AG04450 (cell line): ENCODE measurements at regions of chr9 and their contacts with region 1.

Region 1: GRCh38 chr9:113275157-113276131 is at the starts of genes CDC26 and PRPF4:
- DNase-seq: peak; percentile 96
- H3K4me3 ChIP-seq: peak within 1 kb of the TSS; percentile 98
- H3K27ac ChIP-seq: peak within 1 kb of the TSS; percentile 94
- H3K27me3 ChIP-seq: no peaks in the 10 kb centered on the region
- CTCF ChIP-seq: no peak
- polyA plus RNA-seq, gene CDC26: 38.0 and 52.6 TPM in 2 replicates
- polyA plus RNA-seq, gene PRPF4: 20.1 and 20.9 TPM in 2 replicates

Region 2: GRCh38 chr9:112884101-112884500 is 391.3 kb before region 1 on chr9:
- CTCF ChIA-PET with region 1: no interaction called
- POLR2A ChIA-PET with region 1: no interaction called
- DNase-seq: no peak
- H3K4me3 ChIP-seq: no peak overlapping the region
- H3K27ac ChIP-seq: no peak overlapping the region
- H3K27me3 ChIP-seq: no peaks in the 10 kb centered on the region
- CTCF ChIP-seq: no peak

Region 3: GRCh38 chr9:113221003-113221799 is 54.2 kb before region 1 on chr9 and contains the starts of genes FKBP15 and SLC31A1:
- CTCF ChIA-PET with region 1: interaction called, 5 read pairs
- POLR2A ChIA-PET with region 1: interaction called, 10 read pairs
- DNase-seq: peak; percentile 97
- H3K4me3 ChIP-seq: peak within 1 kb of the TSS; percentile 91
- H3K27ac ChIP-seq: peak within 1 kb of the TSS; percentile 39
- H3K27me3 ChIP-seq: no peaks in the 10 kb centered on the region
- CTCF ChIP-seq: no peak
- polyA plus RNA-seq, gene FKBP15: 27.8 and 28.5 TPM in 2 replicates
- polyA plus RNA-seq, gene SLC31A1: 34.6 and 38.4 TPM in 2 replicates

Region 4: DNA sequence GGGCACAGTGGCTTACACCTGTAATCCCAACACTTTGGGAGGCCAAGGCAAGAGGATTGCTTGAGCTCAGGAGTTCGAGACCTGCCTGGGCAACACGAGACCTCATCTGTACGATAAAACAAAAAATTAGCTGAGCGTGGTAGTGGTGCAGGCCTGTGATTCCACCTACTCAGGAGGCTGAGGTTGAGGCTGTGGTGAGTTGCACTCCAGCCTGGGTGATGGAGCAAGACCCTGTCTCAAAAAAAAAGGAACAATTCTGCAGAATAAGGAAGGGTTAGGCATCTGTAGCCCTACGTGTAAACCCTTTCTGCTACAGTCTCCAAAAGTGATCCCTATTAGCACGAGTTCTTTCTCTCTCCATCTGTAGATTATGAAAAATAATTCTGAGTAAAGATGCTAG is 20.0 kb before region 1 on chr9:
- CTCF ChIA-PET with region 1: interaction called, 20 read pairs
- POLR2A ChIA-PET with region 1: no interaction called
- DNase-seq: no peak
- H3K4me3 ChIP-seq: no peak overlapping the region
- H3K27ac ChIP-seq: no peak overlapping the region
- H3K27me3 ChIP-seq: no peaks in the 10 kb centered on the region
- CTCF ChIP-seq: no peak

Region 5: DNA sequence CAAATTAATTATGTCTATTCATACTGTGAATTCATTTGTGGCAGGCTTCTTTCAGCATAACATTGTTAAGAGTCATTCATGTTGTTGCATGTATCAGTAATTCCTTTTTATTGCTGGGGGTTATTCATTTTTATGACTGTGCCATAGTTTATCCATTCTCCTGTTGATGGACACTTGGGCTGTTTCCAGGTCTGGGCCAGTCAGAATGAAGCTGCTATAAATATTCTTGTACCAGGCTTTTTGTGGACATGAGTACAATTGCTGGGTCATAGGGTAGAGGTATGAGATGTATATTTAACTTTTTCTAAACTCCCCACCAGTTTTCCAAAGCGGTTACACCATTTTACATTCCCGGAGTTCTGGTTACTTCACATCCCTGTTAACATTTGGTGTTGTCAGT is 13.6 kb after region 1 on chr9:
- CTCF ChIA-PET with region 1: interaction called, 10 read pairs
- POLR2A ChIA-PET with region 1: interaction called, 4 read pairs
- DNase-seq: no peak
- H3K4me3 ChIP-seq: no peak overlapping the region
- H3K27ac ChIP-seq: no peak overlapping the region
- H3K27me3 ChIP-seq: no peaks in the 10 kb centered on the region
- CTCF ChIP-seq: no peak

Region 6: GRCh38 chr9:113340017-113340699 is 64.7 kb after region 1 on chr9 and contains the start of gene WDR31:
- CTCF ChIA-PET with region 1: interaction called, 10 read pairs
- POLR2A ChIA-PET with region 1: interaction called, 9 read pairs
- DNase-seq: peak; percentile 74
- H3K4me3 ChIP-seq: peak within 1 kb of the TSS; percentile 89
- H3K27ac ChIP-seq: peak within 1 kb of the TSS; percentile 34
- H3K27me3 ChIP-seq: no peaks in the 10 kb centered on the region
- CTCF ChIP-seq: no peak
- polyA plus RNA-seq, gene WDR31: 0.97 and 1.5 TPM in 2 replicates

Region 7: DNA sequence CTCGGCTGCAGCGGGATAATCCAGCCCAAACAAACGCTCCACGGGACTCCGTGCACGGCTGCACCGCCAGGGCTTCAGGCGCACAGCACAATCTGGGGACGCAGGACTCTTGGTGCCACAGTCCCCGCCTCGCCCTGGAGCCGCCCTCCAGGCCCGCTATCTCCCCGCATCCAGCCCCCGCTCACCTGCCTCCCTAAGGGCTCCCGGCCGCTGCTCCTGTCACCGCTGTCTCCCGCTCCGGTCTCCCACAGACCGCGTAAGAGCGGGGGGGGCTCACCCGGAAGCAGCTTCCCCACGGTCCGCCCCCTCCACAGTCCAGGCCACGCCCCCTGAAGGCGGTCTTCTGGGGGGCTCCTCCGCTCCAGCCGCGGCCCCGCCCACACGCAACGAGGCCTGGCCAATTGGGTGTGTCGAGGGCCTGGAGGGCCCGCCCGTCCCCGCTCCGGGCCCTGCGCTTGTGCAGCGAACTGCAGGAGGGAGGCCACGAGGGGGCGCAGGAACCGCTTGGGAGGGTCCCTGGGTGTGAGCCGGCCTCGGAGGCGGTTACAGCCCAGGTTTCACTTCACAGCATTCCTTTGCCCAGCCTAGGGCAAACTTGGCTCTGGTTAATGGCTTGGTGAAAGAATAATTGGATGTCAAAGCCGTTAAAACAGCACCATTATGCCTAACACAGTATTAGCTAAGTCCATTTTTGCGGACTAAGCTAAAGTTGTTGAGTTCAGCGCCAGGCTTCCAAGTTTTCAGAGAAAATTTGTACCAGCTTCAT is 125.8 kb after region 1 on chr9 and contains the start of gene ALAD:
- CTCF ChIA-PET with region 1: interaction called, 40 read pairs
- POLR2A ChIA-PET with region 1: interaction called, 7 read pairs
- DNase-seq: peak; percentile 94
- H3K4me3 ChIP-seq: peak within 1 kb of the TSS; percentile 94
- H3K27ac ChIP-seq: peak within 1 kb of the TSS; percentile 39
- H3K27me3 ChIP-seq: no peaks in the 10 kb centered on the region
- CTCF ChIP-seq: peak; percentile 90
- polyA plus RNA-seq, gene ALAD: 11.8 and 15.9 TPM in 2 replicates

Region 8: DNA sequence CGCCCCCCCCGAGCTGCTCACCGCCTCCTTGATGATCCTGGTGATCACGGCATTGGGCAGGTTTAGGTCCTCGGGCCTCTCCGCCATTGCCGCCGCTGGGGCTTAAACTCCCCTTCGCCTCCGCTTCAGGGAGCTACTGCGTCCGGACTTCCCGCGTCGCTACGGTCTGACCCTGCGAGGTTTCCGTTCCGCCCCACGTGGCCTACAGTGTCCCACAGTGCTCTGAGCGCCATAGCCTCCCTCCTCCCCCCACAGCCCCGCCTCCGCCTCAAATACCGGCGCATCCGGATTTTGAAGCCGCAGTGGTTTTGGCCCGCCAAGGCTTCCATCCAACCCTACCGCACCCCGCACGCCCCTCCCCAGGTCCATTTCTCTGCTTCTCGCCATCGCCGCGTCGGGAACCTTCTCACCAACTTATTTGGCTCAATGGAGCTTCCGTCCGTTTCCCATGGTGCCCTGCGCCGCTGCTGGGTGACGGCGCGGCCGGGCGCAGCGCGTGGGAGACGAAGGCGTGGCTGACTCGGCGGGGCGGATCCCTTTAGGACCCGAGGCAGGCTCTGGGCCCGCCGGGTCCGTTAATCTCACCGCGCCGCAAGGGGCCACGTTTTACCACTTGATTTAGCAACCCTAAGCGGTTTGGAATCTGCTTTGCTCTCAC is 134.9 kb after region 1 on chr9 and contains the starts of genes C9orf43 and POLE3:
- CTCF ChIA-PET with region 1: interaction called, 40 read pairs
- POLR2A ChIA-PET with region 1: interaction called, 16 read pairs
- DNase-seq: peak; percentile 86
- H3K4me3 ChIP-seq: peak within 1 kb of the TSS; percentile 97
- H3K27ac ChIP-seq: peak within 1 kb of the TSS; percentile 98
- H3K27me3 ChIP-seq: no peaks in the 10 kb centered on the region
- CTCF ChIP-seq: no peak
- polyA plus RNA-seq, gene C9orf43: 0.50 and 0.56 TPM in 2 replicates
- polyA plus RNA-seq, gene POLE3: 36.4 and 45.3 TPM in 2 replicates